Activated T-helper 2 cell treated with anti-CD3 and anti-CD28 coated beads, Interferon-gamma antibody, Interleukin-2, Interleukin-4, amounts not matched to agents 10 μg/mL and 5 μg/mL and 100 μg/mL, durations not matched to agents 14 hours and 24 hours and 36 hours (primary cell): ENCODE measurements at regions of chr2 and their contacts with region 1.

Region 1: GRCh38 chr2:127387655-127388422 is at the start of gene MAP3K2:
- DNase-seq: peak; percentile 90
- H3K4me3 Mint-ChIP-seq: peak within 1 kb of the TSS; percentile 82
- H3K27ac Mint-ChIP-seq: peak within 1 kb of the TSS; percentile 98
- H3K4me1 Mint-ChIP-seq: peaks cover 65% of the 10 kb centered on the region
- H3K27me3 Mint-ChIP-seq: no peaks in the 10 kb centered on the region
- total RNA-seq, gene MAP3K2: 49.6 and 51.3 TPM in 2 replicates

Region 2: DNA sequence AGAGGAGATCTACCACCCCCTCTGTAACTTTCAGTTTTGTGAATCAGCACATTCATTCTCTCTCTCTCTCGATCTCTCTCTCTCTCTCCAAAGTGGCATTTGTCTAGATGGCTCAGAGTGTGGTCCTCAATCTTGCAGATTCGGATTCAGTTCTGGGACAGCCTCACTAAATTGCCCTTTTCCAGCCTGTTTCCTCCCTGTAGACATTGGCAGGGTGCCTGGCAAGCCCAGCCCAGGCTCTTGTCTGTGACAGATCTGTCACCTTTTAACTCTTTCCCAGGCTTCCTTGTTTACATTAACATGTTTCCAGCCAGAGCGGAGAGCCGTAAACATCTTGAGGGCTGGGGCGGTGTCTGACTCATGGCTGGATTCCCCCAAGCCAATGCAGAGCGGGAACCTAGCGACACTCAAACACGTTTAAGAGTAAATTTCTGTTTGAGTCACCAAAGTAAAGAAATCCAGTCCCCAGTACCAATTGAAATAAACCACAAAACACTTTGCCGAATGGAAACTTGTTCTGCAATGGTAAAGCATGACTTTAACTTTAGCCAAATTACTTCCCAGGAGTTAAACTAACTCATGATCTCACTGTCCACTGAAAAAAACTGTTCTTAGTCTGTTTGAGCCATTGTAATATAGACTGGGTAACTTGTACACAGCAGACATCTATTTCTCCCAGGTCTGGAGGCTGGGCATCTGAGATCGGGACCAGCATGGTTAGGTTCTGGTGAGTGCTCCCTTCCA is 161.1 kb before region 1 on chr2:
- intact Hi-C with region 1: loop called (anchors 2 kb)
- DNase-seq: no peak
- H3K4me3 Mint-ChIP-seq: peak overlapping the region; percentile 13
- H3K27ac Mint-ChIP-seq: peak overlapping the region; percentile 82
- H3K4me1 Mint-ChIP-seq: peaks cover 10% of the 10 kb centered on the region
- H3K27me3 Mint-ChIP-seq: peaks cover 27% of the 10 kb centered on the region

Region 3: DNA sequence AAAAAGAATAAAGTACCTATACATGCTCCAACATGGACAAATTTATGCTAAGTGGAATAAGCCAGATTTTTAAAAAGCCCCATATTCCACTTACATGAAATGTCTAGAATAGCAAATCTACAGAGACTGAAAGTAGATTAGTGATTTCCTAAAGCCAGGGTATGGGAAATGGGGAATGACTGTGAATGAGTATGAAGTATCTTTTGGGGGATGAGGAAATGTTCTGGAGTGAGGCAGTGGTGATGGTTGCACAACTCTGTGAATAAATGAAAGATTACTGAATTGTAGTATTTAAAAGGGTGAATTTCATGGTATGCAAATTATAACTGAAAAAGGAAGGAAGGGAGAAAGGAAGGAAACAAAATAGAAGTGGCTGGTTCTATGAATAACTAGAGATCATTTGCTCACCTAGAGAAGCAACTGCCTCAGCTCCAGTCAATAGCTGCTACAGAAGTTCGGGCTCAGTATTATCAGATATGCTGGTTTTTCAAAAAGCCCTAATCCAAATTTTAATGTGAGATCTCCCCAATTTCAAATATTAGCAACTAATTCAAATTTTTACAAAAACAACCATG is 39.3 kb before region 1 on chr2:
- intact Hi-C with region 1: loop called (anchors 5 kb)
- DNase-seq: no peak
- H3K4me3 Mint-ChIP-seq: no peak overlapping the region
- H3K27ac Mint-ChIP-seq: no peak overlapping the region
- H3K4me1 Mint-ChIP-seq: peaks cover 21% of the 10 kb centered on the region
- H3K27me3 Mint-ChIP-seq: no peaks in the 10 kb centered on the region

Region 4: GRCh38 chr2:127400897-127401756 is 13.3 kb after region 1 on chr2:
- intact Hi-C with region 1: loop called (anchors 1 kb)
- DNase-seq: no peak
- H3K4me3 Mint-ChIP-seq: no peak overlapping the region
- H3K27ac Mint-ChIP-seq: peak overlapping the region; percentile 46
- H3K4me1 Mint-ChIP-seq: peaks cover 45% of the 10 kb centered on the region
- H3K27me3 Mint-ChIP-seq: peaks cover 4% of the 10 kb centered on the region

Region 5: DNA sequence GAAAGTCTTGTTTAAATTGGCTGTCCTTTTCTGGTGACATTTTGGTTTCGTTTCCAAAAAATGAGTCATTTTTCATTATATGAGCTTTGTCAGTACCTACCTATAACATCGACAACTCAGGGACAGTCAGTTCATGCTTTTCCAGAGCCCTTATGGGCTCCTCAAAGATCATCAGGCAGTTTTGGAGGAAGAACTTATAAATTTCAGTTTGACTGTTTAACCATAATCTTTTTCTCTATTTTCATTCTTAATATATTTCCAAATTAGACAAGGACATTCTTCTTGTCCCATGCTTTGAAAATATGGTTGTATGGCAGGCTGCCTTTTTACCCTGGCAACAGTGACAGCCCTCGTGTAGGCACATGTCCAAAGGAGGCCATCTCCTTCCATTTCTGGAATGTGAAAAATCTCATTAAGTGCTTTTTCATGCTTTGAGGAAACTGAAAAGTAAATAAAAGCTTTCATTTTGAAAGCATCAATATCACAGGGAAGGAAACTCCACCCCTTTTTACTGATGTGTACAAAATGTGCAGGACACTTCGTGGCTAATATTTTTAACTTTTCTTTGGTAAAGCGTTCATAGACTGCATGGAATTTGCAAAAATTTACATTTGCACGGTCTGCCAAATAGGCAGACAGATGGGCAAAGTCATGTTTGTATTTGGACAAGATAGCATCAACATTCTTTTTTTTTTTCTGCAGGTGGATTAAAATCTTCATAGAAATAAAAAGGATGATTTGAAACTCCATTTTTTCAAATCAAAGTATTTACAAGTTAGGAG is 23.2 kb after region 1 on chr2:
- intact Hi-C with region 1: loop called (anchors 1 kb)
- DNase-seq: no peak
- H3K4me3 Mint-ChIP-seq: peak overlapping the region; percentile 71
- H3K27ac Mint-ChIP-seq: peak overlapping the region; percentile 98
- H3K4me1 Mint-ChIP-seq: peaks cover 45% of the 10 kb centered on the region
- H3K27me3 Mint-ChIP-seq: no peaks in the 10 kb centered on the region

Region 6: DNA sequence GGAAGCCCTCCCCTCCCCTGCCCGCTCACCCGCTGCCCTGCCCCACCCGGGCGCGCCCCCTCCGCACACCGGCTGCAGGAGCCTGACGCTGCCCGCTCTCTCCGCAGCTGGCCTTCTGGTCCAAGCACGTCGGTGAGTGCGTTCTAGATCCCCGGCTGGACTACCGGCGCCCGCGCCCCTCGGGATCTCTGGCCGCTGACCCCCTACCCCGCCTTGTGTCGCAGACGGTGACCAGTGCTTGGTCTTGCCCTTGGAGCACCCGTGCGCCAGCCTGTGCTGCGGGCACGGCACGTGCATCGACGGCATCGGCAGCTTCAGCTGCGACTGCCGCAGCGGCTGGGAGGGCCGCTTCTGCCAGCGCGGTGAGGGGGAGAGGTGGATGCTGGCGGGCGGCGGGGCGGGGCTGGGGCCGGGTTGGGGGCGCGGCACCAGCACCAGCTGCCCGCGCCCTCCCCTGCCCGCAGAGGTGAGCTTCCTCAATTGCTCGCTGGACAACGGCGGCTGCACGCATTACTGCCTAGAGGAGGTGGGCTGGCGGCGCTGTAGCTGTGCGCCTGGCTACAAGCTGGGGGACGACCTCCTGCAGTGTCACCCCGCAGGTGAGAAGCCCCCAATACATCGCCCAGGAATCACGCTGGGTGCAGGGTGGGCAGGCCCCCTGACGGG is 35.1 kb after region 1 on chr2:
- intact Hi-C with region 1: loop called (anchors 5 kb)
- DNase-seq: no peak
- H3K4me3 Mint-ChIP-seq: peak overlapping the region; percentile 47
- H3K27ac Mint-ChIP-seq: no peak overlapping the region
- H3K4me1 Mint-ChIP-seq: peaks cover 5% of the 10 kb centered on the region
- H3K27me3 Mint-ChIP-seq: peaks cover 47% of the 10 kb centered on the region

Region 7: GRCh38 chr2:127464470-127465257 is 76.8 kb after region 1 on chr2:
- intact Hi-C with region 1: loop called (anchors 1 kb)
- DNase-seq: no peak
- H3K4me3 Mint-ChIP-seq: peak overlapping the region; percentile 26
- H3K27ac Mint-ChIP-seq: peak overlapping the region; percentile 86
- H3K4me1 Mint-ChIP-seq: peaks cover 53% of the 10 kb centered on the region
- H3K27me3 Mint-ChIP-seq: no peaks in the 10 kb centered on the region

Region 8: GRCh38 chr2:127649684-127650040 is 261.8 kb after region 1 on chr2:
- intact Hi-C with region 1: no loop called
- DNase-seq: peak; percentile 67
- H3K4me3 Mint-ChIP-seq: no peak overlapping the region
- H3K27ac Mint-ChIP-seq: no peak overlapping the region
- H3K4me1 Mint-ChIP-seq: peaks cover 6% of the 10 kb centered on the region
- H3K27me3 Mint-ChIP-seq: no peaks in the 10 kb centered on the region